ENCODE measurements at regions of chr3 and their contacts with region 1.

Region 1: GRCh38 chr3:114152519-114153151 is 26.2 kb downstream of the DRD3 start:
- DNase-seq: peak; percentile 76 to 81 (median 78)
- H3K4me3 ChIP-seq: peak overlapping the region in 1 of 2 donors; percentile 34
- H3K4me3 Mint-ChIP-seq: peak overlapping the region; percentile 58 to 76 (median 68)
- H3K27ac ChIP-seq: no peak overlapping the region
- H3K27ac Mint-ChIP-seq: peak overlapping the region in 6 of 7 donors; percentile 4 to 79 (median 46)
- H3K4me1 ChIP-seq: peaks cover 6% of the 10 kb centered on the region
- H3K4me1 Mint-ChIP-seq: peaks cover 0 to 6% (median 5%) of the 10 kb centered on the region in 4 donors
- H3K27me3 ChIP-seq: no peaks in the 10 kb centered on the region
- H3K27me3 Mint-ChIP-seq: no peaks in the 10 kb centered on the region

Region 2: GRCh38 chr3:113736548-113737089 is 416.0 kb before region 1 on chr3:
- CTCF ChIA-PET with region 1: interaction called, 11 read pairs
- POLR2A ChIA-PET with region 1: no interaction called
- intact Hi-C with region 1: loop called (anchors 1 kb)
- DNase-seq: peak; percentile 47 to 72 (median 71)
- H3K4me3 ChIP-seq: no peak overlapping the region
- H3K4me3 Mint-ChIP-seq: peak overlapping the region in 1 of 8 donors; percentile 15
- H3K27ac ChIP-seq: peak overlapping the region; percentile 32
- H3K27ac Mint-ChIP-seq: peak overlapping the region; percentile 48 to 88 (median 77)
- H3K4me1 ChIP-seq: peaks cover 32% of the 10 kb centered on the region
- H3K4me1 Mint-ChIP-seq: peaks cover 35 to 61% (median 42%) of the 10 kb centered on the region in 4 donors
- H3K27me3 ChIP-seq: no peaks in the 10 kb centered on the region
- H3K27me3 Mint-ChIP-seq: no peaks in the 10 kb centered on the region

Region 3: DNA sequence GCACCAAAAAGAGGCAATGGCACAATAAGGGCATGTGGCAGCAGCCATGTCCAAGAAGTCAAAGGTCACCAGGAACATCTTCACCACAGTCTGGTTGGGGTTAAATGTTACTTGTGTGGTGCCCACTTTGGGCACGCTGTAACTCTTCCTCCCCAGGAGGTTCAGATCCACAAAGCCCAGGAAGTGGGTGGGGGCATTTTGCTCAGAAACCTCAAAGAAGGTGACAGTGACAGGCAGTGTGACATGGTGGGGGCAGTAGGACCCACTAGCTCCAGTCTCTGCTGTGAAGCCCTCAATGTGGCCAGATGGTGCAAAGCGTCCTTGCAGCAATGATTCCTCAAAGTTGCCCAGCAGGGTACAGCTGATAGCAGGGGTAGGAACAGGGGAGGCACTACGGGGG is 79.0 kb after region 1 on chr3:
- CTCF ChIA-PET with region 1: no interaction called
- POLR2A ChIA-PET with region 1: no interaction called
- intact Hi-C with region 1: loop called (anchors 2 kb)
- DNase-seq: peak; percentile 46 to 73 (median 61)
- H3K4me3 ChIP-seq: peak overlapping the region in 1 of 2 donors; percentile 27
- H3K4me3 Mint-ChIP-seq: peak overlapping the region; percentile 2 to 85 (median 77)
- H3K27ac ChIP-seq: peak overlapping the region; percentile 45
- H3K27ac Mint-ChIP-seq: peak overlapping the region; percentile 91 to 96 (median 95)
- H3K4me1 ChIP-seq: peaks cover 96% of the 10 kb centered on the region
- H3K4me1 Mint-ChIP-seq: peaks cover 65 to 76% (median 68%) of the 10 kb centered on the region in 4 donors
- H3K27me3 ChIP-seq: no peaks in the 10 kb centered on the region
- H3K27me3 Mint-ChIP-seq: no peaks in the 10 kb centered on the region

Region 4: DNA sequence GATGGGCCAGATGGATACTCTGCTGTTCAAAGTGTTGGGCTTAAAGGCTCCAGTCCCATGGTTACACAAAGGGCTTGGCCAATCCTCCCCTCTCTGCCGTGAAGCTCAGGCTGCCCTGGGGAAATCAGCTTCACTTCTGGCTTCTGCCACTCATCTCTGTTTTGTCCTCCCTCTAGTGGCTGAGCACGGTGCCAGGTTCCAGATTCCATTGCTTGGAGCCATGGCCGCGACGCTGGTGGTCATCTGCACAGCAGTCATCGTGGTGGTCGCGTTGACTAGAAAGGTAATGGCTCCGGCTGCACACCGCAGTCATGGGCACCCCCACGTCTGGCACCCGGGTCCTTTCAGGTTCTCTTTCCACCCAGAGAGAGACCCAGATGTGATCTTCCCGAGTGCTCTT is 146.8 kb after region 1 on chr3:
- CTCF ChIA-PET with region 1: interaction called, 44 read pairs
- POLR2A ChIA-PET with region 1: no interaction called
- intact Hi-C with region 1: loop called (anchors 1 kb)
- DNase-seq: peak in 2 of 5 donors; percentile 28
- H3K4me3 ChIP-seq: peak overlapping the region in 1 of 2 donors; percentile 9
- H3K4me3 Mint-ChIP-seq: peak overlapping the region; percentile 59 to 77 (median 68)
- H3K27ac ChIP-seq: peak overlapping the region; percentile 29
- H3K27ac Mint-ChIP-seq: peak overlapping the region in 6 of 7 donors; percentile 32 to 90 (median 76)
- H3K4me1 ChIP-seq: peaks cover 38% of the 10 kb centered on the region
- H3K4me1 Mint-ChIP-seq: peaks cover 31 to 56% (median 42%) of the 10 kb centered on the region in 4 donors
- H3K27me3 ChIP-seq: no peaks in the 10 kb centered on the region
- H3K27me3 Mint-ChIP-seq: no peaks in the 10 kb centered on the region

Region 5: GRCh38 chr3:114383875-114384557 is 231.4 kb after region 1 on chr3:
- CTCF ChIA-PET with region 1: interaction called, 10 read pairs
- POLR2A ChIA-PET with region 1: no interaction called
- intact Hi-C with region 1: loop called (anchors 1 kb)
- DNase-seq: peak; percentile 39 to 50 (median 47)
- H3K4me3 ChIP-seq: peak overlapping the region in 1 of 2 donors; percentile 33
- H3K4me3 Mint-ChIP-seq: peak overlapping the region in 7 of 8 donors; percentile 74 to 89 (median 85)
- H3K27ac ChIP-seq: no peak overlapping the region
- H3K27ac Mint-ChIP-seq: peak overlapping the region in 5 of 7 donors; percentile 38 to 76 (median 61)
- H3K4me1 ChIP-seq: peaks cover 16% of the 10 kb centered on the region
- H3K4me1 Mint-ChIP-seq: peaks cover 8 to 15% (median 12%) of the 10 kb centered on the region in 4 donors
- H3K27me3 ChIP-seq: no peaks in the 10 kb centered on the region
- H3K27me3 Mint-ChIP-seq: no peaks in the 10 kb centered on the region

Measured in CD4-positive, alpha-beta memory T cell (primary cell).